BJ (cell line): ENCODE measurements at regions of chr22 and their contacts with region 1.

Region 1: GRCh38 chr22:23539135-23539838 is 40.8 kb downstream of the IGLL1 start:
- DNase-seq: no peak
- H3K4me3 ChIP-seq: no peak overlapping the region
- H3K27me3 ChIP-seq: no peaks in the 10 kb centered on the region; the same call in 1 of the 2 replicates
- CTCF ChIP-seq: peak; percentile 83

Region 2: GRCh38 chr22:23527971-23528740 is 11.1 kb before region 1 on chr22:
- CTCF ChIA-PET with region 1: interaction called, 12 read pairs
- POLR2A ChIA-PET with region 1: no interaction called
- DNase-seq: no peak
- H3K4me3 ChIP-seq: no peak overlapping the region
- H3K27me3 ChIP-seq: peaks cover 2% of the 10 kb centered on the region; the same call in 1 of the 2 replicates
- CTCF ChIP-seq: no peak